Activated CD8-positive, alpha-beta T cell treated with anti-CD3 and anti-CD28 coated beads, Interleukin-2, amount 10 ng/mL, durations not matched to agents 7 days and 5 days (primary cell): ENCODE measurements at regions of chr3 and their contacts with region 1.

Region 1: DNA sequence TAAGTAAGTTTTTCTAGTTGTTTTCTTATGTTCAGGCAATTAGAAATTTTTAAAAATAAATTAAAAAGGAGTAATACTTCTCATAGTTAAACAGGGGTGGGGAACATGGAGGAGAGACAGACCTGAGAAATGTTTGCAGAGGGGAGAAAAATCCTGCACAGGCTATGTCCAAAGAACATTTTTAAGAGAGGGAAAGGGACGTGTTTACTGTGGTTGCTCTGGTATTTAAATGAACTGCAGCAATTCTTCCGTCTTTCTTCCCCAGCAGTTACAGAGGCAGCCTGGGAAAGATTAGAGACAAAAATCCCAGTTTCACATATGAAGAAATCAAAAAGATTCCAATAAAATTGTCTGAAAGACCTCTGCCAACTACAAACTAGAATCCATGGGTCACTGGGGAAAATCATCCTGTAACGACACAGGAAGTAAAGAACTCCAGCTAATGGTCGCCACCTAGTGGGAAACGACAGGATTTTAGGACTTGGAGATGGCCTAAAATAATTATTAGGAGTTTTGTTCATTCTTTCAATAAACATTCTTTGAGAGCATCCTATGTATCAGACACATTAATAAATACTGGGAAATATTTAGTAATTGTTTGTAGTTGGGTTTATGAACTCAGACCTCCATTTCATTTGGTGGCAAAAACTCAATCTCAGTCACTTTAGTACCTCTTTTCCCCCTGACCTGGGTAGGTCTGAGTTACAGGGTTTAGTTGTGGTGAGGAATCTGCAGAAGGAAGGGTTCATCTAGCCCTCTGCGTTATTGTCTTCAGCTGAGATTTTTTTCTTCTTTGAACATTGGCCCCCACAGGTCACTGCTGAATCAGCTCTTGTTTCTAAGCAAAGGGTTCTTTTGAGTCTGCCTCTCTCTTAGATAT is 69.9 kb upstream of the GOLIM4 start:
- DNase-seq: peak; percentile 59
- ATAC-seq: peak; percentile 70
- H3K4me3 Mint-ChIP-seq: no peak overlapping the region
- H3K27ac Mint-ChIP-seq: no peak overlapping the region
- H3K4me1 Mint-ChIP-seq: peaks cover 3% of the 10 kb centered on the region
- H3K27me3 Mint-ChIP-seq: peaks cover 3% of the 10 kb centered on the region

Region 2: DNA sequence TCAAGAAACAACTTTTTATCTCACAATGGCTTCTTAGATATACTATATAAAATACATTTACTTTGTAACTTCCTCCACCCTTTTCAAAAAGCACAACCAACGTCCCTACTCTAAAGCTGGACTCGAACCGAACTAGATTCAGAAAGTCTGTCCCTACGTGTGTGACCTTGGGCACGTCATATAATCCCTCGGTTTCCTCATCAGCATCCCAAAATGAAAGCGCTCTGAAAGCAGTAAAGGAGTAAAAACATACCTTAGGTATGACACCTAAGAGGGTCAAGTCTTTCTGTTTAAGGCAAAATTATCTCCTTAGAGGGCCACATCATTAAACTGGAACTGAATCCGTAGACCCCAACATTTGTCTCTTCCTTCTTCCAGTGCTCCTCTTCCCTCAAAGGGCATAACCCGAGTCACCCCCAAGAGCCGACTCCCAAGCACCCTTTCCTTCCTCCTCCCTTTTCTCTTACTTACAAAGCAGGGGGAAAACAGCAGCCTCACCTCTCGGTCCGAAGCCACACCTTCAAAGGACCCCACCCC is 431.6 kb before region 1 on chr3:
- CTCF ChIA-PET with region 1: no interaction called
- POLR2A ChIA-PET with region 1: no interaction called
- DNase-seq: peak; percentile 32
- ATAC-seq: no peak
- H3K4me3 Mint-ChIP-seq: no peak overlapping the region
- H3K27ac Mint-ChIP-seq: no peak overlapping the region
- H3K4me1 Mint-ChIP-seq: peaks cover 38% of the 10 kb centered on the region
- H3K27me3 Mint-ChIP-seq: no peaks in the 10 kb centered on the region

Region 3: GRCh38 chr3:168024537-168024941 is 141.1 kb before region 1 on chr3:
- CTCF ChIA-PET with region 1: no interaction called
- POLR2A ChIA-PET with region 1: no interaction called
- DNase-seq: peak; percentile 64
- ATAC-seq: peak; percentile 86
- H3K4me3 Mint-ChIP-seq: no peak overlapping the region
- H3K27ac Mint-ChIP-seq: peak overlapping the region; percentile 68
- H3K4me1 Mint-ChIP-seq: peaks cover 56% of the 10 kb centered on the region
- H3K27me3 Mint-ChIP-seq: no peaks in the 10 kb centered on the region

Region 4: GRCh38 chr3:168047190-168047795 is 118.3 kb before region 1 on chr3:
- CTCF ChIA-PET with region 1: interaction called, 62 read pairs
- POLR2A ChIA-PET with region 1: no interaction called
- DNase-seq: peak; percentile 39
- ATAC-seq: peak; percentile 87
- H3K4me3 Mint-ChIP-seq: no peak overlapping the region
- H3K27ac Mint-ChIP-seq: no peak overlapping the region
- H3K4me1 Mint-ChIP-seq: no peaks in the 10 kb centered on the region
- H3K27me3 Mint-ChIP-seq: peaks cover 4% of the 10 kb centered on the region

Region 5: GRCh38 chr3:168534761-168535160 is 369.1 kb after region 1 on chr3:
- CTCF ChIA-PET with region 1: no interaction called
- POLR2A ChIA-PET with region 1: no interaction called
- DNase-seq: no peak
- ATAC-seq: no peak
- H3K4me3 Mint-ChIP-seq: no peak overlapping the region
- H3K27ac Mint-ChIP-seq: no peak overlapping the region
- H3K4me1 Mint-ChIP-seq: no peaks in the 10 kb centered on the region
- H3K27me3 Mint-ChIP-seq: no peaks in the 10 kb centered on the region